HEK293T (cell line): ENCODE measurements at regions of chr3 and their contacts with region 1.

Region 1: GRCh38 chr3:40191850-40192448 is 117.6 kb upstream of the EIF1B start:
- DNase-seq: peak; percentile 64

Region 2: GRCh38 chr3:40211579-40211978 is 19.6 kb after region 1 on chr3:
- CTCF ChIA-PET with region 1: no interaction called
- POLR2A ChIA-PET with region 1: no interaction called
- DNase-seq: no peak

Region 3: DNA sequence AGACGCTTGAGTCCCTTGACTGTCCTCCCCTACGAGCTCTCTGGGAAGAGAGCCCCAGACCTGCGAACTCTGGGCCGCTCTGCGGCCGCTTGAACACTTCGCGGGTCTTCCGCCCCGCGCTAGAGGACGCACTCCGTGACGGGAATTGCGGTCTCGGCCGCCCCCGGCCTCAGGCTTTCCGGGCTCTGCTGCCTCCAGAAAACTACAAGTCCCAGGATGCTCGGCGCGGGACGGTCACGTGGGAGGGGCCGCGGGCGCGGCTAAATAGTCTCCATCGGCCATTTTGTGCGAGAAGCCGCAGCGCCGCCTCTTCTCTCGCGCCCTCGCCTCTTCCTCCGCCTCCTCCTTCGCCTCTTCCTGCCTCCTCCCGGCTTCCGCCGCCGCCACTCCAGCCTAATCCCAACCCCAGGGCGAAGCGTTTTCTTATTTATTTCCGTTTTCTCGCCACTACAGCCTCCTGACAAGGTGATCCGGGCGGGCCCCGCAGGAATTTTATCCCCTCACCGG is 117.5 kb after region 1 on chr3 and contains the start of gene EIF1B:
- CTCF ChIA-PET with region 1: interaction called, 12 read pairs
- POLR2A ChIA-PET with region 1: interaction called, 4 read pairs
- DNase-seq: peak; percentile 95

Region 4: DNA sequence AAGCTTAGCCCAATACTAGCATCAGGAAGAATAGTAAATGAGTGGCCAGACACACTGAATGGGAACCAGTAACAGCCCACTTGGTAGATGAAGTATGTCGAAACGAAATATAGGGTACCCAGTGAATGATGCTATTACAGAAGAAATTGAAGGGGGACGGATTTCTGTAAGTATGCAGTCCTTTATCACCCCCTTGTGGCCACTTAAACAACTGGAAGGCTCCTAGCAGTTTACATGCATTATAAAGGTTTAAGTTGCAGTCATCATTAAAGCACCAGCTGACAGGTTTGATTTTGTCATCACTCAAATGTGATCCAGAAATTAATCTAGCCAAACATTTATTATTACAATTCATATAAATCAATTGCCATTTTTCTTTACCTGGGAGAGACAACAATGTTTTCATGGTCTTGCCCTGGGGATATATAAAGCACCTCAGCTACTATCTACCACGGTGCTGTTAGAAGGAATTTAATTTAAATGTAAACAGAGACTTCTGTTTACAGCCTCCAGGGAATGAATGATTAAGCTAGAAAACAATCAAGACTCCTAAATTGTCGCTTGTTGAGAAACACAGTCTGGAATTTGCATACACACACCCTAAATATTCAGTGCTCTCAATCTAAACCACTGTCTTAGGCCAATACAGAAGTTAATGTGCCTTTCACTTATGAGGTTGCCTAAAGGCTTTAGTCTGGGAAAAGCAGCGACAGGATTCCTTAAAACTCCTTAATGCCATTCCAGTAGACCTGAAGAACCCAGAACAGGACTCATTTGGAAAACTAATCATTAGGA is 125.3 kb after region 1 on chr3:
- CTCF ChIA-PET with region 1: interaction called, 13 read pairs
- POLR2A ChIA-PET with region 1: interaction called, 4 read pairs
- DNase-seq: peak; percentile 46